ENCODE measurements at regions of chr3 and their contacts with region 1.

Region 1: DNA sequence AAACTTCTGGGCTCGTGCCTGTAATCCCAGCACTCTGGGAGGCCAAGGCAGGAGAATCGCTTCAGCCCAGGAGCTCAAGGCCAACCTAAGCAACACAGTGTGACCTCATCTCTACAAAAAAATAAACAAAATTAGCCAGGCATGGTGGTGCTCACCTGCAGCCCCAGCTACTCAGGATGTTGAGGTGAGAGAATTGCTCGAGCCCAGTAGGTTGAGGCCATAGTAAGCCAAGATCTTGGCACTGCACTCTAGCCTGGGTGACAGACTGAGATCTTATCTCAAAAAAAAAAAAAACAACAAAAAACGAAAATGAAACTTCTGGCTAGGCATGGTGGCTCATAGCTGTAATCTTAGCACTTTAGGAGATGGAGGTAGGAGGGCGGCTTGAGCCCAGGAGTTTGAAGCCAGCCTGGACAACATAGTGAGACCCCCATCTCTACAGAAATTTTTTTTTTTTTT is 53.7 kb downstream of the PIK3CB start:
- DNase-seq: peak; percentile 73 to 87 (median 83)
- H3K4me3 ChIP-seq: peak overlapping the region in 1 of 2 donors; percentile 22
- H3K4me3 Mint-ChIP-seq: peak overlapping the region; percentile 46 to 81 (median 70)
- H3K27ac ChIP-seq: peak overlapping the region; percentile 48
- H3K27ac Mint-ChIP-seq: peak overlapping the region; percentile 86 to 94 (median 92)
- H3K4me1 ChIP-seq: peaks cover 22% of the 10 kb centered on the region
- H3K4me1 Mint-ChIP-seq: peaks cover 20 to 46% (median 29%) of the 10 kb centered on the region in 4 donors
- H3K27me3 ChIP-seq: no peaks in the 10 kb centered on the region
- H3K27me3 Mint-ChIP-seq: no peaks in the 10 kb centered on the region

Region 2: GRCh38 chr3:138818185-138818860 is 37.3 kb after region 1 on chr3:
- CTCF ChIA-PET with region 1: interaction called, 6 read pairs
- POLR2A ChIA-PET with region 1: no interaction called
- intact Hi-C with region 1: loop called (anchors 2 kb)
- DNase-seq: no peak
- H3K4me3 ChIP-seq: no peak overlapping the region
- H3K4me3 Mint-ChIP-seq: peak overlapping the region in 2 of 8 donors; percentile 6 to 33
- H3K27ac ChIP-seq: no peak overlapping the region
- H3K27ac Mint-ChIP-seq: peak overlapping the region in 6 of 7 donors; percentile 11 to 75 (median 68)
- H3K4me1 ChIP-seq: peaks cover 40% of the 10 kb centered on the region
- H3K4me1 Mint-ChIP-seq: peaks cover 28 to 50% (median 39%) of the 10 kb centered on the region in 4 donors
- H3K27me3 ChIP-seq: no peaks in the 10 kb centered on the region
- H3K27me3 Mint-ChIP-seq: no peaks in the 10 kb centered on the region